ENCODE measurements at regions of chr5 and their contacts with region 1.

Region 1: DNA sequence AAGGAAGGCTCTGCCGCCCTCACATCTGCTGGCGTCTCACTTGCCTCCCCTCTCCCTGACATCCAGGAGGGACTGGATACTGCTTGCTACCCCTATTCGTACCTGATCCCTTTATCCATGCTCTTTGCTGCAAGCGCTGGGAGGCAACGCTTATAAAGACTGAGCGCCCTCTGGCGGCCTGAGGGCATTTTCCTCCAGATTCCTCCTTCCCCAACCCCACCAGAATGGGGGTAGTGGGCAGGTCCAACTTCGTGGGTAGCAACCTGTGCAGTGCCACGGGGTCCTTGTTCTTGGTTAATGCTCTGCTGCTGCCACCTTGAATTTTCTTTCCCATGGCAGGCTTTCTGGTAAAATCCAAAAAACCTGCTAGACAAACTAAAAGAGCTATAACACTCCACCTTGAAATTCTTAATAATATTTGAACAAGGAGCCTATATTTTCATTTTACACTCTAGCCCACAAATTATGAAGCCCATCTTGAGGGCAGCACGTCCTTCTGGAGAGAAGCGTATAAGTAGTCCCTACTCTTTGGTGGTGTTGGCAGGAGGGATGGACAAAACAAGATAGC is 52.4 kb downstream of the JADE2 start:
- DNase-seq: peak; percentile 85
- H3K4me3 ChIP-seq: no peak overlapping the region
- H3K27ac ChIP-seq: no peak overlapping the region
- H3K4me1 ChIP-seq: no peaks in the 10 kb centered on the region
- H3K27me3 ChIP-seq: no peaks in the 10 kb centered on the region
- CTCF ChIP-seq: peak; percentile 86

Region 2: GRCh38 chr5:134406390-134406789 is 171.5 kb before region 1 on chr5:
- intact Hi-C with region 1: loop called (anchors 10 kb)
- DNase-seq: no peak
- H3K4me3 ChIP-seq: no peak overlapping the region
- H3K27ac ChIP-seq: no peak overlapping the region
- H3K4me1 ChIP-seq: peaks cover 8% of the 10 kb centered on the region
- H3K27me3 ChIP-seq: no peaks in the 10 kb centered on the region
- CTCF ChIP-seq: no peak

Region 3: DNA sequence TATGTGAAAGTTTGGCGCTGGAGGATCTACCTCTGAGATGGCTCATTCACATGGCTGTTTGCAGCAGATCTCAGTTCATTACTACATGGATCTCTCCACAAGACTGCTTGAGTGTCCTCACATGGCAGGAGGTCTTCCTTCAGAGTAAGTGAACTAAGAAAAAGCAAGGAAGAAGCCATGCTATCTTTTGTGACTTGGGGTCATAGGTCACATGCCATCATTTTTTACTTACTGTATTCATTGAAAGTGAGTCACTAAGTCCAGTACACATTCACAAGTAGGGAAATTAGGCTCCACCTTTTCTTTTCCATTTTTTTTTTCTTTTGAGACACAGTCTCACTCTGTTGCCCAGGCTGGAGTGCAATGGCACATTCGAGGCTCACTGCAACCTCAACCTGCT is 157.5 kb before region 1 on chr5:
- intact Hi-C with region 1: no loop called
- DNase-seq: no peak
- H3K4me3 ChIP-seq: no peak overlapping the region
- H3K27ac ChIP-seq: no peak overlapping the region
- H3K4me1 ChIP-seq: no peaks in the 10 kb centered on the region
- H3K27me3 ChIP-seq: no peaks in the 10 kb centered on the region
- CTCF ChIP-seq: no peak

Region 4: DNA sequence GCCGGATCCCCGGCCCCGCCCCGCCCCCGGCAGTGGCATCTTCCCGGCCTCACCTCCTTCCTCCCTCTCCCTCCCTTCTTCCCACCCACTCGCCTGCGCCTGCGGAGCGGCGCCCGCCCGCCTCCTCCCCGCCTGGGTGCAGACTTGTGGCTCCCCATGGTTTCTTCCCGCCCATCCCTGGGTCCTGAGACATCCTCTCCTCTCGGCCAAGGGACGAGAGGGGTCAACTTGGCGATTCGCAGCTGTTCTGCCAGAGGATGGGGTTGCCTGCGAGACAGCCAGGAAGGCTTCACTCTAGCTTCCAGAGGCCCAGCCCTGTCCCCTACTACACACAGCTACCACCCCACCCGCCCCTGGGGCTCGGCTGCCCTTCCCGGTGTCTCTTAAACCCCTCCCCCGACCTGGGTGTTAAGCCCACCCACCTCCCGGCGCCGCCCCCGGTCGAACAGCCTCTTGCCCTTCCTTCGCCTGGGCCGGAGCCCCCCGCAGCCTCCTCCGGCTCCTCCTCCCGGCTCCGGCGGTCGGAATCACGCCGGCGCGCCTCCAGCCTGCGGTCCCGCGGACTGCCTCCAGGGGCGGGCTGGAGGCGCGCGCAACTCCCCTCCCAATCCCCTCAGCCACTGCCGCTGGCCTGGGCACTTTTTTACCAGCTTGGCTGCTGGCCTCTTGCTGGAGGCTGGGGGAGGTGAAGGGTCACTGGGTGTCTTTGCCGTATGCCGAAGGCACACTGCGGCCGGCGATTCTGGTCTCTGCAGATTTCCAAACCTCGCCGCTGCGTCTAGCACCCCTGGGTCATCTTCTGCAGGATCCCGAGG is 50.5 kb before region 1 on chr5:
- intact Hi-C with region 1: loop called (anchors 5 kb)
- DNase-seq: peak; percentile 87
- H3K4me3 ChIP-seq: peak overlapping the region; percentile 93
- H3K27ac ChIP-seq: peak overlapping the region; percentile 91
- H3K4me1 ChIP-seq: peaks cover 11% of the 10 kb centered on the region
- H3K27me3 ChIP-seq: no peaks in the 10 kb centered on the region
- CTCF ChIP-seq: peak; percentile 69